ENCODE measurements at regions of chr1 and their contacts with region 1.

Region 1: GRCh38 chr1:172144445-172145061 is 275.9 kb upstream of the C1orf105 start:
- DNase-seq: peak in 1 of 2 donors; percentile 97
- H3K4me3 ChIP-seq: peak overlapping the region; percentile 51 to 55
- H3K27ac ChIP-seq: peak overlapping the region; percentile 94
- H3K4me1 ChIP-seq: peaks cover 15% of the 10 kb centered on the region
- H3K27me3 ChIP-seq: no peaks in the 10 kb centered on the region
- CTCF ChIP-seq: no peak
- POLR2A ChIP-seq: peak in 1 of 2 donors; percentile 86

Region 2: GRCh38 chr1:172398970-172399755 is 254.6 kb after region 1 on chr1:
- intact Hi-C with region 1: loop called (anchors 10 kb)
- DNase-seq: peak in 1 of 2 donors; percentile 93
- H3K4me3 ChIP-seq: no peak overlapping the region
- H3K27ac ChIP-seq: peak overlapping the region; percentile 74
- H3K4me1 ChIP-seq: peaks cover 40% of the 10 kb centered on the region
- H3K27me3 ChIP-seq: no peaks in the 10 kb centered on the region
- CTCF ChIP-seq: peak; percentile 32 to 67 (median 63)
- POLR2A ChIP-seq: no peak